AG04450 (cell line): ENCODE measurements at regions of chr10 and their contacts with region 1.

Region 1: GRCh38 chr10:14486777-14487487 is 156.2 kb upstream of the FRMD4A start:
- DNase-seq: peak; percentile 80
- H3K4me3 ChIP-seq: peak overlapping the region; percentile 34
- H3K27ac ChIP-seq: peak overlapping the region; percentile 87
- H3K27me3 ChIP-seq: no peaks in the 10 kb centered on the region
- CTCF ChIP-seq: no peak

Region 2: DNA sequence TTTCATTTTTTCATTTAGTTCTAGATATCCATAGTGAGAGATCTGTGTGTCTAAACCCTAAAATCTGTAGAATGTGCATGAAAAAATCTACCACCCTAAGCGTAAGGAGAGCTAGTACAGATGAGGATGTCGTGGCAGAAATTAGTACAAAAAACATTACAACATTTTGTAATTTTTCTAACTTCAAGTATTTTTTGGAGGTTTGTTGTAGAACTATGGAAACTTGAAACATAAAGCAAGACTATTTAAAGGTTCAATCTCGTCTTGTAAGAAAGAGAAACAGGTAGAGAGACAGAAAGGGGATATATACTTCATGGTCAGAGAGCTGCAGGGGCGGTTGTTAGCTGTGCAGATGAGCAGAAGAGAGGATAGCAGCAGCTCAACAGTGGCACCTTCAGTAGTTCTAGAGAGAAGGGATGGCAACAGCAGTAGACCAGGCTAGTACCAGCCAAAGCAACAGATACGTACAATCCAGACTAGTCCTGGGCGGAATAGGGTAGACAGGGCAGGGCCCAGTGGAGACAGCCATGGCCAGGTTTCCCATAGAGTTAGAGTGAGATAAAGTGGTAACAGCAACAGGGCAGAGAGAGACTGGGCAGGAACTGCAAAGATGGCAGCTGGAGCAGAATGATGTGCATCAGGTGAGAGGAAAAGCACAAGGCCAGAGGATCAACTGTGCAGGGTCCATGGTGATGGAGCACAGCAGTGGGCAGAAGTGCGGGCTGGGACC is 301.5 kb before region 1 on chr10:
- CTCF ChIA-PET with region 1: no interaction called
- POLR2A ChIA-PET with region 1: interaction called, 14 read pairs
- DNase-seq: peak; percentile 83
- H3K4me3 ChIP-seq: no peak overlapping the region
- H3K27ac ChIP-seq: peak overlapping the region; percentile 31
- H3K27me3 ChIP-seq: peaks cover 25% of the 10 kb centered on the region
- CTCF ChIP-seq: 0 out of 2 replicates have a peak, but pooled peaks have one; percentile 11

Region 3: GRCh38 chr10:14195433-14195832 is 291.5 kb before region 1 on chr10:
- CTCF ChIA-PET with region 1: interaction called, 13 read pairs
- POLR2A ChIA-PET with region 1: no interaction called
- DNase-seq: no peak
- H3K4me3 ChIP-seq: no peak overlapping the region
- H3K27ac ChIP-seq: no peak overlapping the region
- H3K27me3 ChIP-seq: peaks cover 13% of the 10 kb centered on the region
- CTCF ChIP-seq: no peak

Region 4: GRCh38 chr10:14397066-14397465 is 89.9 kb before region 1 on chr10:
- CTCF ChIA-PET with region 1: no interaction called
- POLR2A ChIA-PET with region 1: interaction called, 27 read pairs
- DNase-seq: peak; percentile 96
- H3K4me3 ChIP-seq: no peak overlapping the region
- H3K27ac ChIP-seq: peak overlapping the region; percentile 95
- H3K27me3 ChIP-seq: peaks cover 4% of the 10 kb centered on the region
- CTCF ChIP-seq: no peak

Region 5: GRCh38 chr10:14499601-14499904 is 12.6 kb after region 1 on chr10:
- CTCF ChIA-PET with region 1: interaction called, 16 read pairs
- POLR2A ChIA-PET with region 1: no interaction called
- DNase-seq: no peak
- H3K4me3 ChIP-seq: no peak overlapping the region
- H3K27ac ChIP-seq: no peak overlapping the region
- H3K27me3 ChIP-seq: no peaks in the 10 kb centered on the region
- CTCF ChIP-seq: no peak